Stomach (tissue), 19 donors: ENCODE measurements at regions of chr5 and their contacts with region 1.

Region 1: DNA sequence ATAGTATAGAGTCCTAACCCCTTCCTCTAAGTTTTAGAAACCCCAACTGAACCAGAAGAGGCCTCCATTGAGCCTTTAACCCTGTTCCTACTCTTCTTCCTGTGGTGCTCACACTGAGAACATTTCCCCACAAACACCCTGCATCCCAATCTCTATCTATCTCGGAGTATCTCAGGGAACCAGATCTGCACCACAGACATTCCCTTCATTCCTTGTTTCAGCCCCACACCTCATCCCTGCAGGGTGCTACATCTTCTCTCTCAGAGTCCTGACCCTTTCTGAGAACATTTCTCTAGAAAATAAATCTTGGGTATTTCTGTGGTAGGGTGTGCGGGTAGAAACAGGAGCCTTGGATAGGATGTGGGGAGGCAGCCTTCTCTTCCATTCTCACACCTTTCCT is 507.8 kb downstream of the PDE4D start:
- DNase-seq: no peak
- H3K4me3 ChIP-seq: no peak overlapping the region
- H3K27ac ChIP-seq: no peak overlapping the region
- H3K4me1 ChIP-seq: peaks cover 0 to 11% (median 4%) of the 10 kb centered on the region in 4 donors
- H3K27me3 ChIP-seq: no peaks in the 10 kb centered on the region
- CTCF ChIP-seq: no peak
- EP300 ChIP-seq: no peak
- POLR2A ChIP-seq: no peak

Region 2: DNA sequence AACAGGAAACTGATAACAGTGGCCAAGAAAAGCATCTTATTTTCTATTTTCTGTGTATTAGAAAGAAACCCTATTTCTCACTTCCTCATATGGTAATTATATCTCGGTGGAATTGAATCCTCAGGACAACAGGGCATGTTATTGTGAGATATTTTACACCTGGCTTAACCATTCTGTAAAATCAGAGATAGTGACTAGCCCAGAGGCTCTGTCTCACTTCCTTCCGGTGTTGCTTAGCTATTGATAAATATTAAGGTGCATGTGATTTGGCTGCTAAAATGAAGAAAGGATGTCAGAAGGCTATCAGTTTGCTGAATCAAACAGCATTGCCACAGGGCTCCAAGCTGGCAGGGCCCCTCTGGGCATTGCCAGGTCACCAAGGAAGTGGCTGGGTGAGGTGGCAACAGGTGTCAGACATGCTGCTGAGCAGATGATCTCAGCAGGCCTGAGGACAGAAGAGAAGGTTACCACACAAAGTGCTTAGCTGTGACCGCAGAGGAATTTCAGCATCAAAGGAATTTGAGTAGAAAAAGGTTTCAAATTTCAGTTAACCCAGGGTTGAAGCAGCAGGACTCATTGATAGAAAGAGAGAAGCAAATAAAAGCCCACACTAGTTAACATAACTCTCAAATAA is 177.2 kb after region 1 on chr5:
- intact Hi-C with region 1: no loop called
- DNase-seq: peak; percentile 42 to 57
- H3K4me3 ChIP-seq: no peak overlapping the region
- H3K27ac ChIP-seq: peak overlapping the region in 1 of 5 donors; percentile 31
- H3K4me1 ChIP-seq: peaks cover 0 to 14% (median 9%) of the 10 kb centered on the region in 4 donors
- H3K27me3 ChIP-seq: no peaks in the 10 kb centered on the region
- CTCF ChIP-seq: no peak
- EP300 ChIP-seq: no peak
- POLR2A ChIP-seq: no peak

Region 3: DNA sequence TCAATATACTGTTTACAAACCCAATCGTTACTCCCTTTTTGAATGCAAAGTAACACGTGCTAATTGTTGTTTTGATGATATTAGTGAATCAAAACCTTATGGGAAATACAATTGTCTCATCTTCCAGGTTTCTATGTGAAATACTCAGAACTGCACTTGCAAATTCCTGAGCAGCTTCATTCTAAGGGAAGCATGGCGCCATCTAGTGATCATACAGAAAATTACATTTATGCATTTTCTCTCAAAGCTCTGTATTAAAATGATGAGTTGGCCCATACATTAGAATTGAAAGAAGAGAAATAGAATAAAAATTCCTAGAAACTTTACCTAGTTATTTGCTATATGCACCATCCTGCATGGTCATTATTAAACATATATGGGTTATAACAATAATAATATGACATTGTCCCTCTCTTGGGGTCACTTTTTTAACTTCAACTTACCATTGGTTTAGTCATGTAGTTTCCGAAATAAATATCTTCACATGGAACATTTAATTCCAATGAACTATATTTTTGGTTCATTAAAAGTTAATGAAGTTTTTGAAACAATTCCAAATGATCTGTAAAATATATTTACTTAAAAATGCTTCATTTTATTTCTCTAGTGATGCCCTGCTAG is 287.8 kb after region 1 on chr5:
- intact Hi-C with region 1: loop called (anchors 5 kb)
- DNase-seq: peak in 1 of 2 donors; percentile 76
- H3K4me3 ChIP-seq: no peak overlapping the region
- H3K27ac ChIP-seq: no peak overlapping the region
- H3K4me1 ChIP-seq: peaks cover 0 to 7% (median 0%) of the 10 kb centered on the region in 4 donors
- H3K27me3 ChIP-seq: no peaks in the 10 kb centered on the region
- CTCF ChIP-seq: peak in 5 of 7 experiments; percentile 57 to 81 (median 77)
- EP300 ChIP-seq: no peak
- POLR2A ChIP-seq: no peak

Region 4: GRCh38 chr5:59799668-59800346 is 414.1 kb after region 1 on chr5:
- intact Hi-C with region 1: loop called (anchors 5 kb)
- DNase-seq: peak in 1 of 2 donors; percentile 82
- H3K4me3 ChIP-seq: peak overlapping the region in 3 of 4 donors; percentile 12 to 27 (median 18)
- H3K27ac ChIP-seq: peak overlapping the region in 4 of 5 donors; percentile 31 to 57 (median 54)
- H3K4me1 ChIP-seq: peaks cover 11 to 22% (median 17%) of the 10 kb centered on the region in 4 donors
- H3K27me3 ChIP-seq: no peaks in the 10 kb centered on the region
- CTCF ChIP-seq: peak in 5 of 7 experiments; percentile 72 to 87 (median 76)
- EP300 ChIP-seq: no peak
- POLR2A ChIP-seq: no peak